H1 (cell line): ENCODE measurements at regions of chr5 and their contacts with region 1.

Region 1: GRCh38 chr5:150458819-150459557 is 9.4 kb upstream of the RPS14 start:
- DNase-seq: peak in 1 of 2 experiments; percentile 99
- H3K4me3 ChIP-seq: peak overlapping the region in 1 of 4 experiments; percentile 47; a peak in 2 of 8 replicates
- H3K27ac ChIP-seq: no peak overlapping the region
- H3K4me1 ChIP-seq: peaks cover 4 to 20% (median 9%) of the 10 kb centered on the region in 4 experiments
- H3K27me3 ChIP-seq: no peaks in the 10 kb centered on the region
- CTCF ChIP-seq: peak; percentile 69 to 92 (median 89)
- EP300 ChIP-seq: 0 out of 3 replicates have a peak, but pooled peaks of 1 of the 2 experiments have one; percentile 3
- POLR2A ChIP-seq: no peak
- RAD21 ChIP-seq: peak; percentile 89 to 91

Region 2: DNA sequence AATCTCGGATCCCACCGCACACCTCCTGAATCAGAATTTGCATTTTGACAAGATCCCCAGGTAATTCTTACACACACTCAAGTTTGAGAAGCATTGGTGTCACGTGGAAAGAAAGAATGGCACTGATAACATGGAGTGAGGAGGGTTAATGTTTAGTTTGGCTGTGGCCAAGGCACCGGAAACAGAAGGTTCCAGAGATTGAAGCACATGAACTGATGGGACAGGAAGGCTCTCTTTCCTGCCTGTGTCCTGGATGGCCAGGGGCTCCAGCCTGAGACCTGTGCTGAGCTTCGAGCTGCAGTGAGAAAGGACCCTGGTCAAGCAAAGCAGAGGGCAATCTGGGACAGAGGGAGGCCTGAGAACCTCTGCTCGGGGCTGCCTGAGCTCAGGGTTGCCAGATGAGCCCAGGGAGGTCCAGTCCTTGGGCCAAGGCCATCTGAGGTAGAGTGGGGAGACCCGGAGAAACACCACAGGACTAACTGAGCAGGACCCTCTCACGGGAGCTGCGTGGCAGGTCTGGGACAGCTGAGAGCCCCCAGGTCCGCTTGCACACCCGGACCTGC is 1160.1 kb before region 1 on chr5:
- CTCF ChIA-PET with region 1: no interaction called
- POLR2A ChIA-PET with region 1: no interaction called
- DNase-seq: no peak
- H3K4me3 ChIP-seq: no peak overlapping the region
- H3K27ac ChIP-seq: no peak overlapping the region
- H3K4me1 ChIP-seq: peaks cover 0 to 6% (median 2%) of the 10 kb centered on the region in 4 experiments; a peak in 3 of 7 replicates
- H3K27me3 ChIP-seq: no peaks in the 10 kb centered on the region
- CTCF ChIP-seq: no peak
- EP300 ChIP-seq: no peak
- POLR2A ChIP-seq: no peak
- RAD21 ChIP-seq: no peak

Region 3: GRCh38 chr5:150409638-150410523 is 49.1 kb before region 1 on chr5:
- CTCF ChIA-PET with region 1: no interaction called
- POLR2A ChIA-PET with region 1: no interaction called
- DNase-seq: peak; percentile 44 to 80
- H3K4me3 ChIP-seq: peak overlapping the region; percentile 9 to 37 (median 29); a peak in 6 of 8 replicates
- H3K27ac ChIP-seq: no peak overlapping the region
- H3K4me1 ChIP-seq: peaks cover 8 to 27% (median 13%) of the 10 kb centered on the region in 4 experiments
- H3K27me3 ChIP-seq: no peaks in the 10 kb centered on the region
- CTCF ChIP-seq: no peak
- EP300 ChIP-seq: no peak
- POLR2A ChIP-seq: no peak
- RAD21 ChIP-seq: no peak

Region 4: GRCh38 chr5:150441813-150442698 is 16.9 kb before region 1 on chr5:
- CTCF ChIA-PET with region 1: interaction called, 3 read pairs
- POLR2A ChIA-PET with region 1: interaction called, 51 read pairs
- DNase-seq: peak in 1 of 2 experiments; percentile 60
- H3K4me3 ChIP-seq: no peak overlapping the region
- H3K27ac ChIP-seq: peak overlapping the region; percentile 8; the same call in 1 of the 2 replicates
- H3K4me1 ChIP-seq: peaks cover 0 to 7% (median 2%) of the 10 kb centered on the region in 4 experiments; a peak in 5 of 7 replicates
- H3K27me3 ChIP-seq: no peaks in the 10 kb centered on the region
- CTCF ChIP-seq: no peak
- EP300 ChIP-seq: no peak
- POLR2A ChIP-seq: peak in 1 of 2 experiments; percentile 60; a peak in 2 of 3 replicates
- RAD21 ChIP-seq: no peak

Region 5: DNA sequence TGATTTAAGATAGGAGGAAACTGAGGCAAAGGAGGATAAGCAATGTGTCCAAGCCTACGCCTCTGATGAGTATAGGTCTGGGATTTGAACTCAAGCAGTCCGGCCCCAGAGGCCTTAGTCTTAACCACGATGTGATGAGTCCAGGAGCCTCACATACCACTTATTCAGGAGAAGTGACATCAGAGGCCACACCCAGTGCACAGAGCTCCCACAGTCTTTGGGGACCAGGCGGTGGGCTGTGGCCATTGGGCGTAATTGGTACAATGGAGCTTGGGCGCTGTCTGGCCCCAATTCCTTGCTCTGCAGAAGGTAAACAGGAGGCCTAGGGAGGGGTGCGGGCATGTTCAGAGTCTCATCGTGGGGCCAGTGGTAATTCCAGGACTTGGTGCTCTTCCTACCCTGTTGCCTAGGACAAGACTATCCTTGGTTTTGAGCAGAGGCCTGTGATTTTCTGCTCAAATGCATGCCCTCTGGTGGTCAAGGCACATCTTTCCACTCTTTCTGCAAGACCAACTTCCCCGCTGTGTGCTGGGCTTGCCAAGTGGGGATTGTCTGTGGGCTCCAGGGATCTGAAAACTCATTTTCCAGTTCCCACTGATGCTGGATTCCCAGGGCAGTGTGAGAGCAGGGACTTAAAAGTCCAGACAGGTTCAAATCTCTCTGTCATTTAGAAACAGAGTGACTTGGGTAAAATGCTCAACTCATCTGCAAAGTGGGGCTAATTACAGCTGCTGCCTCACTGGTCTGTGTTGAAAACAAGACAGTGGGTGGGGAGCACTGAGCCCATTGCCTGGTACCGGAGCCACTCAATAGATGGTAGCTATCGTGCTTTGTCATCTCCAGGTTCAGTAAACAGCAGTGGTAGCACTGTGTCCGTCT is 64.7 kb after region 1 on chr5:
- CTCF ChIA-PET with region 1: interaction called, 209 read pairs
- POLR2A ChIA-PET with region 1: interaction called, 3 read pairs
- DNase-seq: no peak
- H3K4me3 ChIP-seq: no peak overlapping the region
- H3K27ac ChIP-seq: no peak overlapping the region
- H3K4me1 ChIP-seq: peaks cover 7 to 25% (median 14%) of the 10 kb centered on the region in 4 experiments
- H3K27me3 ChIP-seq: no peaks in the 10 kb centered on the region
- CTCF ChIP-seq: peak; percentile 61 to 86 (median 71)
- EP300 ChIP-seq: no peak
- POLR2A ChIP-seq: no peak
- RAD21 ChIP-seq: peak; percentile 65 to 78

Region 6: DNA sequence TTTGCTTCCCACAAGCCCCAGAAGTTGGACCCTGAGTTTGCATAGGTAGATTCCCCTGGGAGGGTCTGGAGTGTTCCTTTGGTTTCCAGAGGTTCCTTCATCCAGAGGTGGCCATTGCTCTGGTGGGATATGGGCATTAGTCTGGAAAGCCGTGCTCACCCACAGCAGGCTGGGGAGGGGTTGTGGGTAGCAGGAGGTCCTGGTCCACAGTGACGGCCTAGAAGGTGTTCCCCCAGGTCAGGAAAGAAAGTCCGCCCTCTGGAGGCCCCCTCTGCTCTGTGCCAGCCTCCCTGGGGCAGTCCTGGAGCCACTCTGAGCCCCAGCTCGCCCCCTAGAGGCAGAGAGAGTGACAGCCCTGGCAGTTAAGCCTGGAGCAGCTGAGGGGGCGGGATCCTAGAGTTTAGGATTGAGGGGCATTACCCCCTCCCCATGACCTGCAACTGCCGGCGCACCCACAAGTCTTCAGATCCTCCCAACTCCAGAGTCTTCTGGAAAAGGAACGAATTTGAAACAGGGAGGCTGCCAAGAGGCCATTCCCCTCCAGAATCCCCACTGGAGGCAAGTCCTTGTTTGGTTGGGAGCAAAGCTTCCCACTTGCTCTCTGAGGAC is 85.7 kb after region 1 on chr5:
- CTCF ChIA-PET with region 1: interaction called, 40 read pairs
- POLR2A ChIA-PET with region 1: interaction called, 13 read pairs
- DNase-seq: peak; percentile 67 to 97
- H3K4me3 ChIP-seq: no peak overlapping the region
- H3K27ac ChIP-seq: 0 out of 2 replicates have a peak overlapping the region, but pooled peaks have one; percentile 14
- H3K4me1 ChIP-seq: no peaks in the 10 kb centered on the region; a peak in 1 of 7 replicates
- H3K27me3 ChIP-seq: no peaks in the 10 kb centered on the region
- CTCF ChIP-seq: peak; percentile 99 to 100 (median 99)
- EP300 ChIP-seq: no peak
- POLR2A ChIP-seq: 0 out of 3 replicates have a peak, but pooled peaks of 1 of the 2 experiments have one; percentile 30
- RAD21 ChIP-seq: peak; percentile 81 to 89

Region 7: GRCh38 chr5:150554857-150555256 is 95.9 kb after region 1 on chr5:
- CTCF ChIA-PET with region 1: interaction called, 99 read pairs
- POLR2A ChIA-PET with region 1: interaction called, 4 read pairs
- DNase-seq: no peak
- H3K4me3 ChIP-seq: no peak overlapping the region
- H3K27ac ChIP-seq: no peak overlapping the region
- H3K4me1 ChIP-seq: peaks cover 0 to 3% (median under 1%) of the 10 kb centered on the region in 4 experiments; a peak in 4 of 7 replicates
- H3K27me3 ChIP-seq: no peaks in the 10 kb centered on the region
- CTCF ChIP-seq: no peak
- EP300 ChIP-seq: no peak
- POLR2A ChIP-seq: no peak
- RAD21 ChIP-seq: no peak